ENCODE measurements at regions of chr1 and their contacts with region 1.

Region 1: DNA sequence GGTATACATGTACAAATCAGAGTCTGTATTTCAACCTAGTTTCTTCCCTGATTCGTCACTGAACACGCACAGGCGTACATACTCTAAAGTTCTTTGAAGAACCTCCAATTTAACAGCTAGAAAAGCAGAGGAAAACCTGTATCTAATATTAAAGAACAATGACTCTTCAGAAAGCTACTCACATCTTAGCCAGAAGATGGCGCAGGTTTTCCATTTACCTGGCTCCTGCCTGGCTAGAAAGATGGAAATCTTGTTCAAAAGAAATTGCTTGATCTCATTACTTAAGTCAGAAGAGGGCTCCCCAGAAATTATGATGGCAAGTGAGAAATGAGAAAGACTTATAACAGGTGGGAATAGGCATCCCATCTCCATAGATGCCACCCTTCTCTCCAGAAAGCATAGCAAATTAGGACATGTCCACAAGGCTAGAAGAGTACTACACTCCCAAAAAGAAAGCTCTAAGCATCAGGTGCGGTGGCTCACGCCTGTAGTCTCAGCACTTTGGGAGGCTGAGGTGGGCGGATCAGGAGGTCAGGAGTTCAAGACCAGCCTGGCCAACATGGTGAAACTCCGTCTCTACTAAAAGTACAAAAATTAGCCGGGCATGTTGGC is 19.0 kb upstream of the L1TD1 start:
- DNase-seq: peak; percentile 45 to 61
- H3K4me3 ChIP-seq: no peak overlapping the region
- H3K27ac ChIP-seq: no peak overlapping the region
- H3K4me1 ChIP-seq: peaks cover 11% of the 10 kb centered on the region
- H3K27me3 ChIP-seq: no peaks in the 10 kb centered on the region
- CTCF ChIP-seq: peak; percentile 86

Region 2: DNA sequence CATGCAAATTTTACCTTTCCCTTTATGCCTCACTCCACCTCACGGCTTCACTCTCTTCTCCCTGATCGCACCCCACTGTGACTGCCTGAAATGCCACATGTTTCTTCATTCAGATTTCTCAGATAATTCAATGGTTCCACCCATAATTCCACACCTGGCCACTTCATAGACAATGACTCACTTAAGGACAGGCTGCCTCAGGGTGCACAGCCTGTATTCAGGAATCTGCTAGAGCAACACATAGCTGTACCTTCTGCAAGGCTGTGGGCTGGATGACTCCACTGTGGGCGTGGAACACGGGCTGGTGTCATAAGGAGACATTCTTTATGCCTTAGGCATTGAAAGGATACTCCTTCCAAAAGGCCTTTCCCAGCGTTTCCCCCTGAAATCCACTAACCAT is 55.0 kb after region 1 on chr1:
- CTCF ChIA-PET with region 1: interaction called, 7 read pairs
- POLR2A ChIA-PET with region 1: no interaction called
- intact Hi-C with region 1: loop called (anchors 1 kb)
- DNase-seq: peak; percentile 95 to 100
- H3K4me3 ChIP-seq: no peak overlapping the region
- H3K27ac ChIP-seq: peak overlapping the region; percentile 85
- H3K4me1 ChIP-seq: peaks cover 58% of the 10 kb centered on the region
- H3K27me3 ChIP-seq: no peaks in the 10 kb centered on the region
- CTCF ChIP-seq: no peak

Region 3: DNA sequence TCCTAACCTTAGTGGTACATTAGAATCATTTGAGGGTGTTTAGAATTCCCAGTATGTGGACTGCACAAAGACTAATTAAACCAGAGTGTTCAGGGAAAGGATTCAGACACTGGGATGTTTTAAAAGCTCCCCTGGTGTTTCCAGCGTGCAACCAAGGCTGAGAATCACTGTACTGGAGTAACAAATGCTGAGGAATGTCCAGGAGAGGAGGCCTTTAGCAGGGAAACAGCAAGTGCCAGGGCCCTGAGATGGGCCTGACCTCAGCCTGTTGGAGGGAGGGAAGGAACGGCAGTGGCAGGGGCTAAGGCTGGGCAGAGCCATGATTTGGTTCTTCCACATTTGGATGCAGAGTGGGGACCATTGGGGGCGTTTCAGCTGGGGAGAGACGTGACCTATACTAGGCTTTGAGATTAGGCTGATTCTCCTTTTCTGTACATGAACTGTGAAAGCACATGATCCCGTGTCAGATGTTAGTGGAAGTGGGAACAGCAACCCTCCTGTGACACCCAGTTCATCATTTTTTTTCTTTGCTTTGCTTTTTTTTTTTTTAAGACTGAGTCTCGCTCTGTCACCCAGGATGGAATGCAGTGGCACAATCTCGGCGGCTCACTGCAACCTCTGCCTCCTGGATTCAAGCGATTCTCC is 94.3 kb after region 1 on chr1:
- CTCF ChIA-PET with region 1: no interaction called
- POLR2A ChIA-PET with region 1: interaction called, 10 read pairs
- intact Hi-C with region 1: no loop called
- DNase-seq: no peak
- H3K4me3 ChIP-seq: no peak overlapping the region
- H3K27ac ChIP-seq: no peak overlapping the region
- H3K4me1 ChIP-seq: peaks cover 6% of the 10 kb centered on the region; the same call in 1 of the 2 replicates
- H3K27me3 ChIP-seq: no peaks in the 10 kb centered on the region
- CTCF ChIP-seq: no peak

Region 4: GRCh38 chr1:62301726-62302390 is 126.2 kb after region 1 on chr1:
- CTCF ChIA-PET with region 1: interaction called, 11 read pairs
- POLR2A ChIA-PET with region 1: no interaction called
- intact Hi-C with region 1: no loop called
- DNase-seq: no peak
- H3K4me3 ChIP-seq: no peak overlapping the region
- H3K27ac ChIP-seq: no peak overlapping the region
- H3K4me1 ChIP-seq: peaks cover 9% of the 10 kb centered on the region
- H3K27me3 ChIP-seq: no peaks in the 10 kb centered on the region
- CTCF ChIP-seq: no peak

Region 5: GRCh38 chr1:62407405-62408009 is 231.8 kb after region 1 on chr1:
- CTCF ChIA-PET with region 1: interaction called, 13 read pairs
- POLR2A ChIA-PET with region 1: no interaction called
- intact Hi-C with region 1: loop called (anchors 1 kb)
- DNase-seq: no peak
- H3K4me3 ChIP-seq: no peak overlapping the region
- H3K27ac ChIP-seq: no peak overlapping the region
- H3K4me1 ChIP-seq: no peaks in the 10 kb centered on the region
- H3K27me3 ChIP-seq: no peaks in the 10 kb centered on the region
- CTCF ChIP-seq: peak; percentile 94

Region 6: GRCh38 chr1:62746085-62746808 is 570.6 kb after region 1 on chr1:
- CTCF ChIA-PET with region 1: no interaction called
- POLR2A ChIA-PET with region 1: no interaction called
- intact Hi-C with region 1: loop called (anchors 2 kb)
- DNase-seq: peak in 1 of 2 experiments; percentile 39
- H3K4me3 ChIP-seq: peak overlapping the region; percentile 38; the same call in 1 of the 2 replicates
- H3K27ac ChIP-seq: no peak overlapping the region
- H3K4me1 ChIP-seq: no peaks in the 10 kb centered on the region
- H3K27me3 ChIP-seq: no peaks in the 10 kb centered on the region
- CTCF ChIP-seq: peak; percentile 73